Colonic mucosa (tissue), 4 donors: ENCODE measurements at regions of chr11 and their contacts with region 1.

Region 1: GRCh38 chr11:12043959-12044819 is 35.8 kb upstream of the DKK3 start:
- DNase-seq: peak; percentile 78
- H3K4me3 ChIP-seq: no peak overlapping the region
- H3K27ac ChIP-seq: no peak overlapping the region
- H3K4me1 ChIP-seq: peaks cover 6% of the 10 kb centered on the region
- H3K27me3 ChIP-seq: no peaks in the 10 kb centered on the region
- CTCF ChIP-seq: peak; percentile 95

Region 2: GRCh38 chr11:11798586-11799438 is 245.4 kb before region 1 on chr11:
- intact Hi-C with region 1: loop called (anchors 5 kb)
- DNase-seq: peak; percentile 88
- H3K4me3 ChIP-seq: no peak overlapping the region
- H3K27ac ChIP-seq: no peak overlapping the region
- H3K4me1 ChIP-seq: no peaks in the 10 kb centered on the region
- H3K27me3 ChIP-seq: no peaks in the 10 kb centered on the region
- CTCF ChIP-seq: peak; percentile 59

Region 3: GRCh38 chr11:11871991-11872401 is 172.2 kb before region 1 on chr11:
- intact Hi-C with region 1: no loop called
- DNase-seq: no peak
- H3K4me3 ChIP-seq: no peak overlapping the region
- H3K27ac ChIP-seq: no peak overlapping the region
- H3K4me1 ChIP-seq: no peaks in the 10 kb centered on the region
- H3K27me3 ChIP-seq: no peaks in the 10 kb centered on the region
- CTCF ChIP-seq: no peak

Region 4: DNA sequence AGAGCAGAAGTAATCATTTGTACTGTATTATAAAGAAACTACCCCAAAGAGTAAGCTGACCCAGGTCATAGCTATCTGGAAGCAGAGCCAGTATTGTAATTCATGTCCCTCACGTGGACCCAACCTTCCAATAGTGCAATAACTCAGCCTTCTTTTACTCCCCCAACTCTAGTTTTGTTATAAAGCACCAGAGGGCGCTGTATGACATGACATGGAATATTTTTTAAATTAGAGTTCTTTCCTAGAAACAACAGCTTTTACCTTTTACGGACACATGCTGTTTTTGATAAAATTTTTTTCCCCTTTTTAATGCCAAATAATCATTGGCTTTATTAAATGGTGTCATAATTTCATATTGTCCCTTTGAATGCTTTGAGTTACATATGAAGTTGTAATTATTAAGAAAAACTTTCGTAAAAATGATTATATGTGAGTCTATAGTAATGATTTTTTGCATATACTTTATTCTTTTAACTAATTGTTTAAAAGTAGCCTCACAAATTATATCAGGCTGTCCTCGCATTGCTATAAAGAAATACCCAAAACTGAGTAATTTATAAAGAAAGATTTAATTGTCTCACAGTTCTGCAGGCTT is 112.6 kb before region 1 on chr11:
- intact Hi-C with region 1: loop called (anchors 5 kb)
- DNase-seq: no peak
- H3K4me3 ChIP-seq: no peak overlapping the region
- H3K27ac ChIP-seq: no peak overlapping the region
- H3K4me1 ChIP-seq: no peaks in the 10 kb centered on the region
- H3K27me3 ChIP-seq: no peaks in the 10 kb centered on the region
- CTCF ChIP-seq: peak; percentile 58

Region 5: GRCh38 chr11:12281571-12282478 is 237.6 kb after region 1 on chr11:
- intact Hi-C with region 1: loop called (anchors 2 kb)
- DNase-seq: peak; percentile 90
- H3K4me3 ChIP-seq: no peak overlapping the region
- H3K27ac ChIP-seq: no peak overlapping the region
- H3K4me1 ChIP-seq: no peaks in the 10 kb centered on the region
- H3K27me3 ChIP-seq: no peaks in the 10 kb centered on the region
- CTCF ChIP-seq: peak; percentile 96